Caco-2 (cell line): ENCODE measurements at regions of chr21 and their contacts with region 1.

Region 1: DNA sequence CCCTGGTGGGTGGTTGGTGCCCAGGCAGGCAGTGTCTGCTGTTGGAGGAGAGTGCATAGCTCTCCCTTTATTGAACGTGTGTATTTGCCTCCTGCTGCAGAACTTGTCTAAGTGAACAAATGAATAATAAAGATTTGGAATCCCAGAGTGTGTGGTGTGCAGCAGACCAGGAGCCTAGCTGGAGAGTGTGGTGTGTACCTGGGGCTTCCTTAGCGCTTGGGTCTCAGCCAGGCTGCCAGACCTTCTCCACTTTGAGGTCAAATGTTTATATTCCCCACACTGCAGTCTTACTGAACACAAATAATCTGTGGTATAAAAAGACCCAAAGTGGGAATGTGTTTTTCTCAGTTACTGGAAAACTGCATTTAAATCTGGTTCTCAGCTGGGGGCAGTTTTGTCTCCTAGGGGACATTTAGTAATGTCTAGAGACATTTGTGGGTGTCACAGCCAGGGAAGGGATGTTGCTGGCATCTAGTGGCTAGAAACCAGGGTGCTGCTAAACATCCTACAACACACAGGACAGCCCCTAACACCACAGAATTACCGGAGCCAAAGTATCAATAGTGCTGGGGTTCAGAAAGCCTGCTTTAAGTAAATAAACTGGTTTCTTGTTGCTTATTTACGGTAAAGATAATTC is 23.6 kb downstream of the SLC37A1 start:
- DNase-seq: peak; percentile 19 to 34
- H3K4me3 ChIP-seq: no peak overlapping the region
- H3K4me3 Mint-ChIP-seq: no peak overlapping the region
- H3K27ac Mint-ChIP-seq: no peak overlapping the region
- H3K4me1 ChIP-seq: no peaks in the 10 kb centered on the region
- H3K4me1 Mint-ChIP-seq: no peaks in the 10 kb centered on the region
- H3K27me3 ChIP-seq: no peaks in the 10 kb centered on the region
- H3K27me3 Mint-ChIP-seq: no peaks in the 10 kb centered on the region
- CTCF ChIP-seq: peak in 1 of 2 experiments; percentile 56

Region 2: GRCh38 chr21:42467140-42467983 is 69.9 kb before region 1 on chr21:
- CTCF ChIA-PET with region 1: interaction called, 13 read pairs
- POLR2A ChIA-PET with region 1: no interaction called
- intact Hi-C with region 1: loop called (anchors 1 kb)
- DNase-seq: peak in 1 of 2 experiments; percentile 28
- H3K4me3 ChIP-seq: no peak overlapping the region
- H3K4me3 Mint-ChIP-seq: no peak overlapping the region
- H3K27ac Mint-ChIP-seq: no peak overlapping the region
- H3K4me1 ChIP-seq: peaks cover 26% of the 10 kb centered on the region
- H3K4me1 Mint-ChIP-seq: peaks cover 18% of the 10 kb centered on the region
- H3K27me3 ChIP-seq: no peaks in the 10 kb centered on the region
- H3K27me3 Mint-ChIP-seq: no peaks in the 10 kb centered on the region
- CTCF ChIP-seq: peak; percentile 21 to 58